Uterus (tissue), 4 donors: ENCODE measurements at regions of chr16 and their contacts with region 1.

Region 1: GRCh38 chr16:20849587-20850390 is 43.5 kb downstream of the REXO5 start:
- DNase-seq: peak; percentile 77 to 78
- H3K4me3 ChIP-seq: no peak overlapping the region
- H3K27ac ChIP-seq: peak overlapping the region; percentile 77 to 85
- H3K4me1 ChIP-seq: peaks cover 14 to 20% of the 10 kb centered on the region in 2 donors
- H3K27me3 ChIP-seq: no peaks in the 10 kb centered on the region
- CTCF ChIP-seq: peak; percentile 95 to 97 (median 96)
- POLR2A ChIP-seq: no peak

Region 2: GRCh38 chr16:20720251-20720650 is 129.5 kb before region 1 on chr16:
- intact Hi-C with region 1: no loop called
- DNase-seq: no peak
- H3K4me3 ChIP-seq: no peak overlapping the region
- H3K27ac ChIP-seq: no peak overlapping the region
- H3K4me1 ChIP-seq: no peaks in the 10 kb centered on the region
- H3K27me3 ChIP-seq: no peaks in the 10 kb centered on the region
- CTCF ChIP-seq: no peak
- POLR2A ChIP-seq: no peak

Region 3: DNA sequence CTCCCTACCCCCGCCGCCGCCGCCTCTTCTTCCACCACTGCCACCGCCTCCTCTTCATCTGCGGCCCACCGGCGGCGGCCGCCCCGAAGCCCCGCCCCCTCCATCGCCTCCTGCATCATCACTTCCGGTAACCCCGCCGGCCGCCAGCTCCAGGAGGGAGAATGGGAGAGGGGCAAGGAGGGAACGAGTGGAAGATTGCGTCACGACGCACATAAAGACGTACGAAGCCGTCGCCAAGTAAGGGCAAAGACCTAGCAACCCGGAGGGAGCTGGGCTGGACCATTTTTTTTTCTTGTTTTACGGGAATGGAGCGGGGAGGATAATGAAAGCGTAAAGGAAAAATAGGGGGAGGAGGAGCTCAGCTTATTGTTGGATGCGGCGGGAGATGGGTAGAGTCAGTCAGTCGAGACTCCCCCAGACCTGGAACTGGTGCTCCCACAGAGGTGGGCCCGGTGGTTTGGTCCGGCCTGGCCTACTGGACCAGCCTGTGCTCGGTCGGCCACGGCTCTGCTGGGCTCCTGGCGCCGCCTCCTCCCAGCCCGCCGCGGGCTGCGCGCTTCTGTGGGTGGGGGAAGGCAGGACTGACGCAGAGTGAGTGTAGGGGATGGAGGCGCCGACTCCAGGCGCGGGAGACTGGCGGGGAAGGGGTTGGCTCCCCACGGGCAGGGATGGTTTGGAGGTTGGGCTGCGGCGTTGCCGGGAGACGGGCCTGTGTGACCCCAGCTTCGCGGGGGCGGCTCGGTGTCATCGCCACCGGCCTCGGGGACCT is 50.7 kb after region 1 on chr16 and contains the starts of genes DCUN1D3 and LYRM1:
- intact Hi-C with region 1: loop called (anchors 10 kb)
- DNase-seq: peak; percentile 97 to 98
- H3K4me3 ChIP-seq: peak within 1 kb of the TSS; percentile 71 to 98
- H3K27ac ChIP-seq: peak within 1 kb of the TSS; percentile 96 to 100
- H3K4me1 ChIP-seq: peaks cover 4 to 16% of the 10 kb centered on the region in 2 donors
- H3K27me3 ChIP-seq: no peaks in the 10 kb centered on the region
- CTCF ChIP-seq: no peak
- POLR2A ChIP-seq: peak; percentile 81 to 97
- total RNA-seq, gene DCUN1D3: 14.7 to 38.0 (median 21.5) TPM
- total RNA-seq, gene LYRM1: 40.0 to 201 (median 51.0) TPM

Region 4: GRCh38 chr16:21083729-21084268 is 234.0 kb after region 1 on chr16:
- intact Hi-C with region 1: loop called (anchors 5 kb)
- DNase-seq: peak; percentile 47 to 59
- H3K4me3 ChIP-seq: no peak overlapping the region
- H3K27ac ChIP-seq: peak overlapping the region in 1 of 2 donors; percentile 45
- H3K4me1 ChIP-seq: no peaks in the 10 kb centered on the region
- H3K27me3 ChIP-seq: no peaks in the 10 kb centered on the region
- CTCF ChIP-seq: peak; percentile 54 to 70 (median 66)
- POLR2A ChIP-seq: no peak

Region 5: DNA sequence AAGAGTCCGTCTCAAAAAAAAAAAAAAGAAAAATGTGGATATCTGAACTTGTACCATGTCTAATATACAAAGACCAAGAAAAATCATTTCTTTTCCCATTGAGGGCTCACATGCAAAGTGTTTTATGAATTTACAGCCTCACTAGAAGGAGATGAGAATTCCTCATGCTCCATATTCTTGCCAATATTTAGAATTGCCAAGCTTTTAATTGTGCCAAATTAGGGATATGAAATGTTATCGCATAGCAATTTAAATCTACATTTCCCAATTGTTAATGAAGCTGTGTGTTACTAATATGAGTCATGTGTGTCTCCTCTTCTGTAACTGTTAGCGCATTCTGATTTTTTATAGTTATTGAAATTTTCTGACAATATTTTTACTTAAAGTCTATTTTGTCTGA is 491.3 kb after region 1 on chr16:
- intact Hi-C with region 1: no loop called
- DNase-seq: no peak
- H3K4me3 ChIP-seq: no peak overlapping the region
- H3K27ac ChIP-seq: no peak overlapping the region
- H3K4me1 ChIP-seq: no peaks in the 10 kb centered on the region
- H3K27me3 ChIP-seq: peaks cover 0 to 3% of the 10 kb centered on the region in 2 donors
- CTCF ChIP-seq: no peak
- POLR2A ChIP-seq: no peak